ENCODE measurements at regions of chr11 and their contacts with region 1.

Region 1: DNA sequence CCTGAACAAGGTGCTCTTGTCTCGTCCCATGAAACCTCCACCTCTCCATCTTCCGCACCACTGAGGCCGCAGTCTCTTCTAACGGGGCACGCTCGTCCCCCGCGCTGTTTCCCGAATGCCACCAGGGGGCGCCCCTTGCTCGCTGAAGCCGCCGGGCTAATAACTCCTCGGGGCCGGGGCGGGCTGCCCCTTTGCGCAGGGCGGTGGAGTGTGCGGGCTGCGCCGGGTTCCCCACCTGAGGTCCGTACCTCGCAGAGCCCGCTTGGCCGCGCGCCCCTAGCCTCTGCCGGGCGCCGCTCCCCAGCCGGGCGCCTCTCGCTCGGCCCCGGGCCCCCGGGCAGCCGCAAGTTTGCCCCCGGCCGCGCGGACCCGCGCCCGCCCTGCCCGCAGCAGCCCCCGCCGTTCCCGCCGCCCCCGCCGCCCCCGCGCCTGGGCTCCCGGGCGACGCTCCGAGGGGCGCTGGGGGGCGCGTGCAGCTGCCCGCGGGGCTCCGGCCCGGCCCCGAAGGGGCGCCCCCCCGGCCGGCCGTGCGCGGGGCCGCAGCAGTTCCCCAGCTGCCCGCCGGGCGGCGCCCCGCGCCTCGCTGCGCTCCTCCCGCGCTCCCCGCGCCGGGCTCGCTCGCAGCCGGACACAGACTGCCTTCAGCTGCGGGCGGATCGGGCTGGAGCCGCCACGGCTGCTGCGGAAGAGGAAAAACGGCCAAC is at the start of gene GRIK4:
- DNase-seq: peak; percentile 59
- H3K4me3 Mint-ChIP-seq: no peak within 1 kb of the TSS
- H3K27ac Mint-ChIP-seq: no peak within 1 kb of the TSS
- H3K4me1 Mint-ChIP-seq: peaks cover 5% of the 10 kb centered on the region
- H3K27me3 Mint-ChIP-seq: peaks cover 60% of the 10 kb centered on the region
- total RNA-seq, gene GRIK4: 0.16 TPM in 1 of 2 replicates, not detected in the other

Region 2: GRCh38 chr11:120432056-120433018 is 78.9 kb before region 1 on chr11:
- intact Hi-C with region 1: no loop called
- DNase-seq: no peak
- H3K4me3 Mint-ChIP-seq: peak overlapping the region; percentile 1
- H3K27ac Mint-ChIP-seq: peak overlapping the region; percentile 49
- H3K4me1 Mint-ChIP-seq: peaks cover 18% of the 10 kb centered on the region
- H3K27me3 Mint-ChIP-seq: no peaks in the 10 kb centered on the region

Region 3: GRCh38 chr11:120801801-120802689 is 290.8 kb after region 1 on chr11:
- intact Hi-C with region 1: loop called (anchors 1 kb)
- DNase-seq: peak; percentile 21
- H3K4me3 Mint-ChIP-seq: no peak overlapping the region
- H3K27ac Mint-ChIP-seq: no peak overlapping the region
- H3K4me1 Mint-ChIP-seq: no peaks in the 10 kb centered on the region
- H3K27me3 Mint-ChIP-seq: no peaks in the 10 kb centered on the region

Region 4: GRCh38 chr11:120929664-120930154 is 418.4 kb after region 1 on chr11:
- intact Hi-C with region 1: loop called (anchors 1 kb)
- DNase-seq: peak; percentile 9
- H3K4me3 Mint-ChIP-seq: no peak overlapping the region
- H3K27ac Mint-ChIP-seq: no peak overlapping the region
- H3K4me1 Mint-ChIP-seq: no peaks in the 10 kb centered on the region
- H3K27me3 Mint-ChIP-seq: peaks cover 2% of the 10 kb centered on the region

Region 5: DNA sequence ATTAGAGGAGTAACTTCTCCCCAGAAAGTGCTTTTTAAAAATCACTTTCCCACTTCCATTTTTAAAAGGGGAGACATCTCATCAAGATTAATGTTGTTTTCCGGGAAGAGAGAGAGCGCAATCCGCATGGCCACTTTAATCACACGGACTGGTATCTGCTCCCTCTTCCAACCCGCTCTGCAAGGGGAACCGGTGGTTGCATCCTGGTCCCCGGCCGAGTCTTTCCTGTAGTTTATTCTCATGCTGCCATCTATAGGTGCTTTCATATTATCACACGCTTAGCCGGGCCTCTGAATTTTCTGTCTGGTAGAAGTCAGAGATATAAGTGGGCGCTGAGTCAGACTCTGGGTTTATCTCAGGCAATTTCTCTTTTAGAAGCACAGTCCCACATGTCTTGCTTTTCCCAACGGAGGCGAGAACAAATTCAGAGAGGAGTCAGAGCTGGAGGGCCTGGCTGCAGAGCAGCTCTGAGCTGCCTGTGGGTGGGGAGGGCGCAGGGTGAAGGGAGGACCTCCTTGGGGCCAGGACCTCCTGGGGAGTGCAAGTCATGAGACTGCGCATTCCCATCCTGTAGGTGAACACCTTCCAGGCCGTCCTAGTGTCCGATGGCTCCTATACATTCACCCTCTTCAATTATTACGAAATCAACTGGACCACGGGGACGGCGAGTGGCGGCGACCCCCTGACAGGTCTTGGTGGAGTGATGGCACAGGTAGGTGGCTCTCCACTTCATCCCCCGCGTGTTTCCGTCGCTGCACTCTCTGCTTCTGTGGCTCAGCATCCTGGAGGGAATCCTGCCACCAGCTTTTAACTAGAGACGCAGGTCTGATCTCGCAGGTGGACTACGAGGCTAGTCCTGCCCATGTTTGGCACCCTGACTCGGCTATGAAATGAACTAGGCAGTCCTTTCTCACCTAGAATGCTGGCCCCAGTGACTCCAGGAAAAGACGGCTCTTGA is 601.5 kb after region 1 on chr11:
- intact Hi-C with region 1: loop called (anchors 2 kb)
- DNase-seq: peak; percentile 14
- H3K4me3 Mint-ChIP-seq: no peak overlapping the region
- H3K27ac Mint-ChIP-seq: no peak overlapping the region
- H3K4me1 Mint-ChIP-seq: no peaks in the 10 kb centered on the region
- H3K27me3 Mint-ChIP-seq: peaks cover 20% of the 10 kb centered on the region

Region 6: GRCh38 chr11:121194731-121195596 is 683.7 kb after region 1 on chr11:
- intact Hi-C with region 1: loop called (anchors 1 kb)
- DNase-seq: peak; percentile 34
- H3K4me3 Mint-ChIP-seq: no peak overlapping the region
- H3K27ac Mint-ChIP-seq: no peak overlapping the region
- H3K4me1 Mint-ChIP-seq: peaks cover 7% of the 10 kb centered on the region
- H3K27me3 Mint-ChIP-seq: peaks cover 16% of the 10 kb centered on the region